ENCODE measurements at regions of chr17 and their contacts with region 1.

Region 1: GRCh38 chr17:70552230-70552981 is 383.1 kb downstream of the KCNJ2 start:
- DNase-seq: no peak
- ATAC-seq: peak; percentile 64 to 83 (median 75)
- H3K4me3 ChIP-seq: peak overlapping the region in 5 of 12 donors; percentile 7 to 21 (median 13)
- H3K27ac ChIP-seq: peak overlapping the region in 3 of 12 donors; percentile 7 to 13 (median 9)
- H3K4me1 ChIP-seq: peaks cover 0 to 5% (median 0%) of the 10 kb centered on the region in 12 donors
- H3K27me3 ChIP-seq: no peaks in the 10 kb centered on the region
- CTCF ChIP-seq: peak in 11 of 12 donors; percentile 45 to 69 (median 59)
- POLR2A ChIP-seq: no peak

Region 2: GRCh38 chr17:69567130-69567529 is 985.3 kb before region 1 on chr17:
- intact Hi-C with region 1: loop called in 7 of 10 experiments (anchors 5 to 10 kb)
- DNase-seq: no peak
- ATAC-seq: no peak
- H3K4me3 ChIP-seq: no peak overlapping the region
- H3K27ac ChIP-seq: no peak overlapping the region
- H3K4me1 ChIP-seq: peaks cover 0 to 3% (median 0%) of the 10 kb centered on the region in 12 donors
- H3K27me3 ChIP-seq: no peaks in the 10 kb centered on the region
- CTCF ChIP-seq: no peak
- POLR2A ChIP-seq: no peak

Region 3: DNA sequence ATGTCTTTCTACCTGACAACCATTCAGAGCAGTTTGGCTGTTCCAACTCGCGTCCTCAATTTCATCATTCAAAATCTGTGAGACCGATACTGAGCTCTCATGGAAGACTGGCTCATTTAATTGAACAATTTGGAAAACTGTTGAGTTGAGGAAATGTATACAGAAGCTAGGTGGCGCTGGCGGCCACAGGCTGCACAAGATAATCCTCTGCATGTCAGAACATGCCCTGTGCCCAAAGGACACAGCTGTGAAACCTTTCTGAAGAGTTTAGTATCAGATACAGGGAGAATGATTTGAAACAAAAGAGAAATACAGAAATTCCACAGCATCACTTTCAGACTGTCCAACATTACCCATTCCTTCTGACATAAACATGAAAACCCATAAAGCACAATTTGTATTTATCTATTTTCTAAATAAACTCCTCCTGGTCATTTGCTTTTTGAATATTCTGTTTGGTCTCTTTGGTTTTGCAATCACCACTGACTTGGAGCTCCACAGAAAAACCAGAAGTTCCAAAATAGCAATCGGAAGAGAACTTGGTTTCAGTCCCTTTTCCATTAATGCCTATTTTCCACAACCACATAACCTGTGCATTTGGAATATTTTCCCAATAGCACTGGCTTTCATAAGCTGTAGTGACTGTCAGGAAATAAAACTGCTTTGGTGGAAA is 945.1 kb before region 1 on chr17:
- intact Hi-C with region 1: loop called in 2 of 10 experiments (anchors 5 kb)
- DNase-seq: peak; percentile 62 to 87 (median 76)
- ATAC-seq: peak; percentile 68 to 92 (median 86)
- H3K4me3 ChIP-seq: no peak overlapping the region
- H3K27ac ChIP-seq: peak overlapping the region; percentile 1 to 81 (median 62)
- H3K4me1 ChIP-seq: peaks cover 5 to 39% (median 33%) of the 10 kb centered on the region in 12 donors
- H3K27me3 ChIP-seq: no peaks in the 10 kb centered on the region
- CTCF ChIP-seq: peak; percentile 79 to 95 (median 89)
- POLR2A ChIP-seq: no peak

Region 4: GRCh38 chr17:70168977-70169708 is 383.3 kb before region 1 on chr17 and contains the start of gene KCNJ2:
- intact Hi-C with region 1: loop called in 9 of 10 experiments (anchors 5 to 10 kb)
- DNase-seq: peak; percentile 92 to 94 (median 94)
- ATAC-seq: peak; percentile 83 to 97 (median 91)
- H3K4me3 ChIP-seq: peak within 1 kb of the TSS; percentile 62 to 87 (median 77)
- H3K27ac ChIP-seq: peak within 1 kb of the TSS; percentile 87 to 98 (median 94)
- H3K4me1 ChIP-seq: peaks cover 0 to 38% (median 4%) of the 10 kb centered on the region in 12 donors
- H3K27me3 ChIP-seq: no peaks in the 10 kb centered on the region
- CTCF ChIP-seq: peak in 1 of 12 donors; percentile 3
- POLR2A ChIP-seq: peak; percentile 61 to 99
- total RNA-seq, gene KCNJ2: 28.8 to 60.7 (median 48.8) TPM

Measured in heart left ventricle (tissue), 16 donors.